ENCODE measurements at regions of chr16 and their contacts with region 1.

Region 1: GRCh38 chr16:64225696-64226095 is 896.2 kb downstream of the CDH11 start:
- DNase-seq: no peak

Region 2: GRCh38 chr16:64116151-64116550 is 109.5 kb before region 1 on chr16:
- intact Hi-C with region 1: loop called in 1 of 2 experiments (anchors 2 kb)
- DNase-seq: no peak

Measured in posterior vena cava (tissue), 2 donors.